AG04450 (cell line): ENCODE measurements at regions of chr2 and their contacts with region 1.

Region 1: DNA sequence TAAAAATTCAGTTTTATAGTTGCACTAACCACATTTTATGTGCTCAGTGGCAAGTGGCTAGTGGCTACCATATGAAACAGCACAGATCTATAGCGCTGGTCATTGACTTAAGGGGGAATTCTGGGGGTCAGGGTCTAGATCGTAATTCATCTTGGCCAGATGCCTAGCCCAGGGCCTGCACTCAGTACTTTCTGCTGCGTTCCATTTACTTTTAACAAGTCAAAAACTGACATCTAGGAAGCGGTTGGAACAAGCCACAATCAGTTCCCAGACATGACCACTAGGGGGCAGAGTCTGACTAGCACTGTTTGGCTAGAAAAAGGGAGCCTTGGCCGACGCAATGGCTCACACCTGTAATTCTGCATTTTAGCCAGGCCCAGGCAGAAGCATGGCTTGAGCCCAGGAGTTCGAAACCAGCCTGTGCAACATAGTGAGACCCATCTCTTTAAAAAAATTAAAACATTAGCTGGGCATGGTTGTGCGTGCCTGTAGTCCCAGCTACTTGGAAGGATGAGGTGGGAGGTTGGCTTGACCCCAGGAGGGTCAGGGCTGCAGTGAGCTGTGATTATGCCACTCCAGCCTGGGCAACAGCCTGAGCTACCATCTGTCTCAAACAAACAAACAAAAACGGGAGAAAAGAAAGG is 9.0 kb upstream of the TMBIM1 start:
- DNase-seq: peak; percentile 66
- H3K4me3 ChIP-seq: no peak overlapping the region
- H3K27ac ChIP-seq: no peak overlapping the region
- H3K27me3 ChIP-seq: peaks cover 3% of the 10 kb centered on the region
- CTCF ChIP-seq: peak; percentile 95

Region 2: DNA sequence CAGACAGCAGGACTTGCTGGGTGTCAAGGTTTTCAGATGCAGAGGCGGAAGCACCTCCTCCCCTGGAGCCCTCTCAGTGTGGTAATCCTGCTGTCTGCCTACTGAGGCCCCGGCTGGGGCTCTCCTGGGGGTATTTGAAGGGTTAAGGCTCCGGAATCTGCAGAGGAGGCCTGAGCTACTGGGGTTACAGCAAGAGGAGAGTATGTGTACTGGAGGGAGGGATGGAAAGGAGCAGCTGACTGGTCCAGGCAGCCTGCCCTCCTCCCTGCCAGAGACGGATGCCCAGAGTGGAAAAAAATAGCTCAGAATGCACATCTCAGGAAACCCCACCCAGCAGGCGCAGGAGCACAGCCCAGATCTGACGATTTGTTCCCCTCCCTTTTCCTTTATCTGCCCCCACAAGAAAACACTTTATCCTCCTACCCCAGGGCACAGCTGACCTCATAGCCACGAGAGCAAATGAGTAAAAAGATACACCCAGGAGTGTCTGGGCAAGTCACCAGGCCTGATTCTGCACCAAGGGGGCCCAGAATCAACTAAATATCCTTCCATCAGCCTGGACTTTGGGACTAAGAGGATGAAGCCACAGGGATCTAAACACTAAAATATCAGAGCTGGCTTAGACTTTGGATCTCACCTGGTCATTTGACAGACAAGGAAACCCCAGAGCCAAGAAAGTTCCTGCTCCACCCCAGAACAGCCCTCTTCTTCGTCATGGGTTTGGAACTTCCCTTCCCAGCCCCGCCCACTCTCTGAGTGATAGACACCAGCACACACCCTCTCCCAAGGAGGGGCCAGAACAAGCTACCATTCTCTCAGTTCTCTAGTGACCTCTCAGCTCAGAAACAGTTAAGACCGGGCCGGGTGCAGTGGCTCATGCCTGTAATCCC is 14.5 kb before region 1 on chr2:
- CTCF ChIA-PET with region 1: interaction called, 14 read pairs
- POLR2A ChIA-PET with region 1: interaction called, 6 read pairs
- DNase-seq: peak; percentile 84
- H3K4me3 ChIP-seq: peak overlapping the region; percentile 64
- H3K27ac ChIP-seq: peak overlapping the region; percentile 100
- H3K27me3 ChIP-seq: no peaks in the 10 kb centered on the region
- CTCF ChIP-seq: no peak

Region 3: DNA sequence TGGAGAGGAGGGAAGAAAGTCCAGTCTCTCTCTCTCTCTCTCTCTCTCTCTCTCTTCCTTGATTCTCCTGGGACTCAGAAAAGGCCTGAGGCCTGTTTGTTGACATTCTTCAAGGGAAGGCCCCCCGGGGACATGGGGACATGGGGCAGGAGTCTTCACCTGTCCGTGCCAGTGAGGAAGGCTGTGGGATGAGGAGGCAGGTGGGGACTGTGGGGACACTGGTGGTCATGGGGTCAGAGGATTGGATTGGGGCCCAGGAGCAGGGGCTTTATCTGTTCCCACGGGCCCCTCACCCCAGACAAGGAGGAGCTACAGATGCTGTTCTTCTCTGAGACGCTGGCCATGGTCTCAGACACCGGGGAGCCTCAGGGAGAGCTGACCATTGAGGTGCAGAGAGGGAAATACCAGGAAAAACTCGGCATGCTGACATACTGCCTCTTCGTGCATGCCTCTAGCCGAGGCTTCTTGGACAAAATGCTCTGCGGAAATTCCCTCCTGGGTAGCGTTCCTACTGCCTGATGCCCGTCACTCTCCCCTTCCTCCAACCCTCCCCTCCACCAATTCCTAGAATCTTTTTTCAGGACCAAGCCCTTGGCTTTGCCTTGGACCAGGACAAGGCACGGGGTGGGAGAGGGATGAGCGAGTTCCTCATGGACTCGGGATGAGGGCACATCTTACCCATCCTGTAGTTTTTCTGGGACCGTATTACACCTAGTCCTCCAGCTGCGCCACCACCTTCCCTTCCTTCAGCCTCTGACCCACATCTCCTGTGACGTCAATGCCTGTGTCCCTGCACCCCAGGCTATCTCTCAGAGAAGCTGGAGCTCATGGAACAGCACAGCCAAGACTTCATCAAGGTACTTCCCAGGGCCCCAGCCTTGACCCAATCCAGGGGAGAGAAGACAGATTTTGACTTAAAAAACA is 56.2 kb after region 1 on chr2:
- CTCF ChIA-PET with region 1: interaction called, 67 read pairs
- POLR2A ChIA-PET with region 1: no interaction called
- DNase-seq: no peak
- H3K4me3 ChIP-seq: no peak overlapping the region
- H3K27ac ChIP-seq: no peak overlapping the region
- H3K27me3 ChIP-seq: no peaks in the 10 kb centered on the region
- CTCF ChIP-seq: no peak

Region 4: DNA sequence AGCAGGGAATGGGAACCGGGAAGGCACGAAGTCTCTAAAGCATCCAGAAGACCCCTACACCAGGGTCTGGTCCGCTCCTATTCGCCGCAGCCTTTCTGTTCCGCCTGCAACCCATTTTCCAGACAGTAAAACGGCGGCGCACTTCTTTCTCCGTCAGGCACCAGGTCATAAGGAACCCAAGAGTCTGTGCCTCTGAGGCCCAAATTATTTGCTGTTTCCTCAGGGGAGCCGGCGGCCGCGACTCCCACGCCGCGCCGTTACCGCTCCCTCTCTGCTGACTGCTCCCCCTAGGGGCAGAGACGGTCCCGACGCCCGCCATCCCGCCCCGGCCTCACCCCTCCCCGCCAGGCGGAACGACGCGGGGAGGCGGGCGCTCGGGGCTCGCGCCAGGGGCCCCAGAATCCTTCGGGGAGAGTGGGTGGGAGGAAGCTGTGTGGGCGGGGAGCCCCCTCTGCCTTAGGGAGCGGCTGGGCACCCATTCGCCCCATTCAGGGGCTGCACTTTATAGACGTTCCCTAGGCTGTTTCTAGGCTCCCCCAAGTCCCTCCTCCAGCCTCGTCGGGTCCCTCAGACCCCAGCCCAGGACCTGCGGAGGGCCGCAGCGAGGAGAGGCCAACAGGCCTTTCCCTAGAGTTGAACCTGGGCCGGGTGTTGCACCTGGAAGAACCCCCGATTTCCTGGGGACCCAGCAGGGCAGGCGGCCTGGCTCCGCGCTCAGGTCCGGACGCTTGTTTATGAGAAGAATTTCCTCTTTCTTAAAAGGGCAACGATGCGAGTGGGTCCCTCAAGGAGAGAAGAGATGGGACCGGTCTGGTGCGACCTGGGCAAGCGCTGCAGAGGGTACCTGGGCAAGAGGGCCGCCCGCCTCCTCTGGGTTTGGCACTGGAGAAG is 94.7 kb after region 1 on chr2:
- CTCF ChIA-PET with region 1: interaction called, 49 read pairs
- POLR2A ChIA-PET with region 1: interaction called, 5 read pairs
- DNase-seq: peak; percentile 94
- H3K4me3 ChIP-seq: peak overlapping the region; percentile 76
- H3K27ac ChIP-seq: peak overlapping the region; percentile 98
- H3K27me3 ChIP-seq: no peaks in the 10 kb centered on the region
- CTCF ChIP-seq: peak; percentile 75